Psoas muscle (tissue), 8 donors: ENCODE measurements at regions of chrX and their contacts with region 1.

Region 1: GRCh38 chrX:23782863-23783568 is at the start of gene SAT1:
- DNase-seq: peak; percentile 94 to 98
- ATAC-seq: peak; percentile 95 to 97 (median 96)
- H3K4me3 ChIP-seq: peak within 1 kb of the TSS; percentile 82
- H3K27ac ChIP-seq: peak within 1 kb of the TSS; percentile 88
- H3K4me1 ChIP-seq: no peaks in the 10 kb centered on the region
- H3K27me3 ChIP-seq: no peaks in the 10 kb centered on the region
- CTCF ChIP-seq: peak; percentile 73
- total RNA-seq, gene SAT1: 20.7 to 129 (median 41.7) TPM

Region 2: GRCh38 chrX:23742697-23743622 is 40.1 kb before region 1 on chrX and contains the start of gene ACOT9:
- intact Hi-C with region 1: loop called in 1 of 2 experiments (anchors 5 kb)
- DNase-seq: peak; percentile 95 to 96
- ATAC-seq: peak; percentile 96 to 98 (median 96)
- H3K4me3 ChIP-seq: peak within 1 kb of the TSS; percentile 79
- H3K27ac ChIP-seq: peak within 1 kb of the TSS; percentile 98
- H3K4me1 ChIP-seq: no peaks in the 10 kb centered on the region
- H3K27me3 ChIP-seq: no peaks in the 10 kb centered on the region
- CTCF ChIP-seq: no peak
- total RNA-seq, gene ACOT9: 21.7 to 58.9 (median 44.5) TPM

Region 3: DNA sequence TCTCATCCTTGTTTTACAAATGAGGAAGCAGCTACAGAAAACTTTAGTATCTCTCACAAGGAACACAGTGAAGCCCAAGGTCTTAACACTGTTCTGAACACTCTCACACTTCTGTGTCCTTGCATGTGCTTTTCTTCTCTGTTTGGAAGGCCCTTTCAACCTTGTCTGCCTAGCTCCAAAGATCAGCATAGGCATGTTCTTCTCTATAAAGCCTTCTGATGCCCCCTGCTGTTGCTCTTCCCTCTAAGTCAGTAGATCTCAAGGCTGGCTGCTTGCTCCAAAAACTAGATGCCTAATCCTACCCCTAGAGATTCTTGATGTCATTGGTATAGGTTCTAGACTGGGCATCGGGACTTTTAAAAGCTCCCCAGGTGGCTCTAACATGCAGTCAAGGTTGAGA is 118.8 kb after region 1 on chrX:
- intact Hi-C with region 1: loop called (anchors 2 kb)
- DNase-seq: no peak
- ATAC-seq: peak; percentile 73 to 86 (median 78)
- H3K4me3 ChIP-seq: peak overlapping the region; percentile 15
- H3K27ac ChIP-seq: peak overlapping the region; percentile 71
- H3K4me1 ChIP-seq: peaks cover 19% of the 10 kb centered on the region
- H3K27me3 ChIP-seq: no peaks in the 10 kb centered on the region
- CTCF ChIP-seq: peak; percentile 40

Region 4: GRCh38 chrX:24014388-24015018 is 231.5 kb after region 1 on chrX:
- intact Hi-C with region 1: loop called in 1 of 2 experiments (anchors 10 kb)
- DNase-seq: no peak
- ATAC-seq: no peak
- H3K4me3 ChIP-seq: no peak overlapping the region
- H3K27ac ChIP-seq: no peak overlapping the region
- H3K4me1 ChIP-seq: no peaks in the 10 kb centered on the region
- H3K27me3 ChIP-seq: peaks cover 0 to 17% (median 0%) of the 10 kb centered on the region in 3 donors
- CTCF ChIP-seq: no peak

Region 5: DNA sequence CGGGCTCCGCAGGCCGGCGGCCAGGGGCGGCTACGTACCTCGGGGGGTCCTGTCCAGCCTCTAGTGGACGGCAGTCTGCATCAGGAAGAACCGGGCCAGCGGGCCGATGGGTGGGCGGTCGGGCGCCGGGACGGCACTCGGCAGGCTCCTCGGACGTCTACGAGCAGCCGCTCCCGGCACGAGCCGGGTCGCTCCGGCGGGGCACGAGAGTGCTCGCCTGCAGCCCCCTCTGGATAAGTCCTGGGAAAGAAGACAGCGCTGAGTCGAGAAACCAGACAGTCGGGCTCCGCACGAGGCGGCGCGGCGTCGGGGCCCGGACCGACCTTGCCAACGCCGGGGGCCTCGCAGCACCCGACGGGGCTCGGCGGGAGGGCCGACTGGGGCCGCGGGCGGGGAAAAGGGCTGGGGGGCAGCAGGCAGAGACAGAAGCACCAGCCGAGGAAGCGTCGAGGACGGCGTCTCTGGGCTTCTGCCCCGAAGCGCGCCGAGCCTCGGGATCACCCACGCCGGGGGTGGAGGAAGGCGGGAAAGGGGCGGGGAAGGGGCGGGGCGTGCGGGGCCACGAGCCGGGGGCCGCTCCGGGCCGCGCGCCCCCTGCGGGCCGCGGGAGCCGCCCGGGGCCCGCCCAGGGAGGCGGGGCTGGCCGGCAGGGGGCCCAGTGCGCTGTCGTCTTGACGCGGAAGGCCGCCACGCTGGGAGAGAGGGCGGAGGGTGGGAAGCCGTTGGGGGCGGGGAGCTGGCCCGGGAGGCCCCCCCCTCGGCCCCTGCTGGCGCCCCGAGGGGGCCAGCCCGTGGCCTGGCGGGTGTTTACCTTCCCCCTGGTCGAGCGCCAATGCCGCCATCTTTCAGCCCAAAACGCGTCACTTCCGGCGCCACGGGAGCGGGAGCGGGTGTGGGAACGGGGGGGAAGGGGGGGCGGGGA is 242.1 kb after region 1 on chrX:
- intact Hi-C with region 1: no loop called
- DNase-seq: peak; percentile 89 to 93
- ATAC-seq: peak; percentile 91 to 97 (median 92)
- H3K4me3 ChIP-seq: peak overlapping the region; percentile 85
- H3K27ac ChIP-seq: peak overlapping the region; percentile 92
- H3K4me1 ChIP-seq: no peaks in the 10 kb centered on the region
- H3K27me3 ChIP-seq: peaks cover 0 to 15% (median 0%) of the 10 kb centered on the region in 3 donors
- CTCF ChIP-seq: peak; percentile 33